Astrocyte of the cerebellum (primary cell): ENCODE measurements at regions of chr2 and their contacts with region 1.

Region 1: GRCh38 chr2:97806738-97807618 is 93.6 kb downstream of the ZAP70 start:
- DNase-seq: peak; percentile 54
- H3K4me3 ChIP-seq: no peak overlapping the region
- CTCF ChIP-seq: peak; percentile 93

Region 2: DNA sequence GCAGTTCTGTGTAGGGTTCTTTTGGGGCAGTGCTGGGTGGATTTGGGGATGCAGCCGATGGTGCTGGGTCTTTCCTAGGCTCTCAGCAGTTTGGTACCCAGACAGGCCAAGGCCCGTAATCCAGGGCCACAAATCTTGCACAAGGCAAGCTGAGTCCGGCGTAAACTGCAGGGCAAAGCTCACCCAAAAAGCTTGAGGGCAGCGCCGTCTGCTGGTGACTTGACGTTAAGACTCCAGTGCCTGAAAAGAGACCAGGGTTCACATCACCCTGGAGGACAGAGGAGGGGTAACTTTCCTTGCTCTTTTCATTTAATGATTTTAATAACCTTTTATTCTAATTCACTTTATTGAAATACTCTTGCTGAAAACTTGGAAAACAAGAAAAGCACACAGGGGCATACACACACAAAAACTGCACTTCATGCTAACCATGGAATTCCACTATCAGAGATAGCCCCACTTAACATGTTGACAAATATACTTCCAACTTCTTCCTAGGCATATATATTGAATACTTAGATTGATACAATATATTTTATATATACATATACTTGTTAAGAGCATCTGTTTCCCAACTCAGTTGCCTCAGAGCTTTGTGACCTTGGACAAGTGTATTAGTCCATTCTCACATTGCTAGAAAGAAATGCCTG is 578.2 kb after region 1 on chr2:
- in situ Hi-C with region 1: loop called (anchors 25 kb)
- DNase-seq: peak; percentile 41
- H3K4me3 ChIP-seq: no peak overlapping the region
- CTCF ChIP-seq: peak; percentile 100